ENCODE measurements at regions of chr11 and their contacts with region 1.

Region 1: DNA sequence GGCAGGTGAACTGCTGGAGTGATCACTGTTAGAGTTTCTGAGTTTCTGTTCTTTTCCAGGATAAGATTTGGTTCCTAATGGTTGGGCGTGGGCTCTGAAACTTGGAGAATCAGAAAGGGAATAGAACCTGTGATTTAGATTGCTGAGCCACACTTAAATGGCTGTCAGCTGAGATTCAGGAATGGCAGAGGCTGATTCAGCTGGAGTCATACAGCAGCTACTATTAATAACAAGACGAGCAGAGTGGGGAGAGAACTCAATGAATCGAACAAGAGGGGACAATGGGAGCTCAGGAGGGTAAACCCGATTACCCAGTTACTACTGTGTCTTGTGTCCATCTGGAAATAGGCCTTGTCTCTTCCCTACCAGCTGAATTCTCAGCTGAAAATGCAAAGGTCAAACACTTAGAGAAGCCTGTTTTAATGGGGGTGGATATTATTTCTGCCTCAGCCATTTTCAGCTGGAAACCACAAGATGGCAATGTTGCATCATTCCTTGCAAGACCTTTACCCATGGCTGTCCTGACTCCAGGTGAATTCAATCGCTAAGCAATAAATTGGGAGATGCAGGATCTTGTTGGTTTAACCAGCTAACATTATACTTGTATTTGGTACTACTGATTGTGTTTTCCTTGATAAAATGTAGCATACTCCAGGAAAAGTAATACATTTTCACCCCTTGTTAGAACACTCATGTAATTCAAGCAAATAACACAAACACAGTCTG is 104.5 kb upstream of the RAG2 start:
- DNase-seq: peak; percentile 62
- H3K4me3 Mint-ChIP-seq: no peak overlapping the region
- H3K27ac Mint-ChIP-seq: no peak overlapping the region
- H3K4me1 Mint-ChIP-seq: peaks cover 1% of the 10 kb centered on the region
- H3K27me3 Mint-ChIP-seq: peaks cover 17% of the 10 kb centered on the region

Region 2: DNA sequence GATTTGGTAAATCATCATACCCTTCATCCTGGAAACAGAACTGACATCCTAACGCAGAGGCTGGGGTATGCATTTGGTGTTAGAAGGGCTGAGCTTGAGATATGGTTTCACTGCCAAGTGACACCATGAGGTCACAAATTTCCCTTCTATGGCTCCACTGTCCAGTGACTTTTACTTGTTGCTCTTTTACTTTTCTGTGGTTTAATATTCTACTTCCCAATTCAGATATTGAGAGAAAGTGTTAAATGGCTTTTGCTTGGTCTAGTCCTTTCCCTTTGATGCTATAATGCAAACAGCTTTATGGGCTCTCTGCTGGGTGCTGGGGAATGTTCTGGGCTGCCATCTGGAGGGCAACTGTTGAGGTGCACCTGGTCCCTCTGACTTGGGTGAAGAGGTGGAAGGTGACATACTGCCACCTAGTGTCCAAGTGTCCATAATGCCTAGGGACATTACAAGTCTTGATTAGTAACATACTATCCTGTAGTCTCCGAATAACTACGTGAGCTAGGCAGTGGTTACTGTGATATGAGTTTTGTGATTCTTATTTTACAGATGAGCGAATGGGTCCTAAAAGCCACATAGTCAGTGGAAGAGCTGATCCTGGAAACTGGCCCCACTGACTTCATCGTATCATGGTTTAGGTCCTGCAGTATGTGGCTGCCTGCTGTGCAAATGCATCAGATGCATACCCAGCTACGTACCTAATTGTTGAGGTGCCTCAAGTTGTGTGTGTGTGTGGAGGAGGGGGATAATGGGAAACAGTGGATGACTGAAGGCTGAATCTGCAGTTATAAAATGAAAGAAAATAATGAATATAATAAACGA is 44.6 kb after region 1 on chr11:
- intact Hi-C with region 1: loop called (anchors 1 kb)
- DNase-seq: peak; percentile 96
- H3K4me3 Mint-ChIP-seq: no peak overlapping the region
- H3K27ac Mint-ChIP-seq: no peak overlapping the region
- H3K4me1 Mint-ChIP-seq: peaks cover 2% of the 10 kb centered on the region
- H3K27me3 Mint-ChIP-seq: peaks cover 12% of the 10 kb centered on the region